ENCODE measurements at regions of chr7 and their contacts with region 1.

Region 1: GRCh38 chr7:44797329-44798251 is 1.1 kb downstream of the PPIA start:
- DNase-seq: peak; percentile 63 to 88 (median 78)
- ATAC-seq: peak; percentile 47 to 59 (median 56)
- H3K4me3 ChIP-seq: peak overlapping the region; percentile 76 to 99
- H3K4me3 Mint-ChIP-seq: peak overlapping the region; percentile 87 to 95 (median 89)
- H3K27ac ChIP-seq: peak overlapping the region; percentile 99
- H3K27ac Mint-ChIP-seq: peak overlapping the region; percentile 93 to 95
- H3K4me1 ChIP-seq: peaks cover 17 to 25% of the 10 kb centered on the region in 2 experiments
- H3K4me1 Mint-ChIP-seq: peaks cover 26 to 42% (median 42%) of the 10 kb centered on the region in 3 donors
- H3K27me3 ChIP-seq: no peaks in the 10 kb centered on the region
- H3K27me3 Mint-ChIP-seq: no peaks in the 10 kb centered on the region

Region 2: GRCh38 chr7:44587843-44588711 is 209.5 kb before region 1 on chr7:
- CTCF ChIA-PET with region 1: interaction called, 5 to 13 read pairs
- POLR2A ChIA-PET with region 1: no interaction called
- DNase-seq: peak in 30 of 35 experiments; percentile 30 to 79 (median 56)
- ATAC-seq: peak; percentile 70 to 85 (median 72)
- H3K4me3 ChIP-seq: no peak overlapping the region
- H3K4me3 Mint-ChIP-seq: no peak overlapping the region
- H3K27ac ChIP-seq: no peak overlapping the region
- H3K27ac Mint-ChIP-seq: peak overlapping the region in 1 of 2 donors; percentile 62
- H3K4me1 ChIP-seq: peaks cover 0 to 5% of the 10 kb centered on the region in 2 experiments
- H3K4me1 Mint-ChIP-seq: peaks cover 5 to 9% (median 7%) of the 10 kb centered on the region in 3 donors
- H3K27me3 ChIP-seq: peaks cover 0 to 6% of the 10 kb centered on the region in 2 experiments
- H3K27me3 Mint-ChIP-seq: no peaks in the 10 kb centered on the region

Region 3: DNA sequence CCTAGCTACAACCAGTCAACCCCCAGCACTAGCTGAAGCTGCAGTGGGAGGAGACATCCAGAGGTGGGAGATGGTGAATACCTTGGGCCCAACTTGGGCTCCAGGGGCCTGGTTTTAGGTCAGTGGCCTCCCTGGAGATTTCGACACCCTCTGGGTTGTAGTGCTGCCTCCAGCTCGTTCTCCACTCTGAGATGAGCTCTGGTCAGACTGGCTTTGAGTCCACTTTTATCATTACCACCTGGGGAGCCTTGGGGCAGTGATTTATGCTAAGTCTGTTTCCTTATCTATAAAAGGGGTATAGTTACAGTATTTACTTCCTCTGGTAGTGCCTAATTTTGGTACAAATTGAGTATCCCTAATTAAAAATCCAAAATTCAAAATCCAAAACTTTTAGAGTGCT is 21.7 kb after region 1 on chr7:
- CTCF ChIA-PET with region 1: interaction called in 1 of 2 experiments, 15 read pairs
- POLR2A ChIA-PET with region 1: no interaction called
- DNase-seq: no peak
- ATAC-seq: no peak
- H3K4me3 ChIP-seq: no peak overlapping the region
- H3K4me3 Mint-ChIP-seq: no peak overlapping the region
- H3K27ac ChIP-seq: no peak overlapping the region
- H3K27ac Mint-ChIP-seq: no peak overlapping the region
- H3K4me1 ChIP-seq: no peaks in the 10 kb centered on the region
- H3K4me1 Mint-ChIP-seq: peaks cover 0 to 9% (median 4%) of the 10 kb centered on the region in 3 donors
- H3K27me3 ChIP-seq: no peaks in the 10 kb centered on the region
- H3K27me3 Mint-ChIP-seq: no peaks in the 10 kb centered on the region